ENCODE measurements at regions of chr11 and their contacts with region 1.

Region 1: DNA sequence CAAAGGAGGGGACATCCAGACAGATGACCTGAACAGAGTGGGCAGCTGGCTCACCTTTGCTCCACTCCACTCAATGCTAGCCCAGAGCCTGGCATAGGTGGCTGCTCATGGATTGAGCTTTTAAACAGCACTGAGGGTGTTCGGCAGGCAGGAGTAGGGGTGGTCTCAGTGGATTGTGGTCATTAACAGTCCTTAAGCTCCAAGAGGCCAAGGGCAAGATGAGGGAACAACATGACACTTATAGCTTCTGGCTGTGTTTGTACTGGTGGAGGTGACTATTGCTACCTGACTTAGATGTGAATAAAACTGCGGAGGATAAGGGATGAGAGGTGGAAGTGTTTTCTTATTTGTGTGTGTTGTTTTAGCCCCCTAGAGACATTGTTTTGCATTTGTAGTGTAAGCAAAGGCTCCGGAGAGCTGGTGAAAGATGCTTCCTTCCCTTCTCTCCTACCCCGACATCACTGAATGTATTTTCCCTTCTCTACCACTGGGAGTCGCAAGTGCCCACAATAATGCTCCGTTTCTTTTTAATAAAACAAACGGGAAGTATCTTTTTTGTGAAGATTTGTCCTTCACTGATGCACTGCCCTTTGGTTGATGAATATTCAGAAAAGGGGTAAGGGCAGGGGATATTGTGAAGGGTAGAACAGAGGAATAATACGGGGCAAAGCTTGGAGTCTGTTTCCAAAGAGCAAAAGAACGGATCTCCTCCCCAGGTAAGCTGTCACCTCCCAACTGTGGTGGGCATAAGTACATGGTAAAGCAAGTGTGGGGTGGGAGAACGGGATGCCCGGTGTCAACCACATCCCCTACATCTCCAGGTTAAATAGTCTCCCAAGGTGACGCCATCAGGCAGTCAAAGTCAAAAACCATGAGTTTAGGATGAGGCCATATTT is 27.5 kb upstream of the MTNR1B start:
- DNase-seq: peak; percentile 61
- H3K4me3 ChIP-seq: no peak overlapping the region
- H3K27ac ChIP-seq: no peak overlapping the region
- H3K4me1 ChIP-seq: no peaks in the 10 kb centered on the region
- H3K27me3 ChIP-seq: peaks cover 5% of the 10 kb centered on the region
- CTCF ChIP-seq: peak; percentile 86

Region 2: DNA sequence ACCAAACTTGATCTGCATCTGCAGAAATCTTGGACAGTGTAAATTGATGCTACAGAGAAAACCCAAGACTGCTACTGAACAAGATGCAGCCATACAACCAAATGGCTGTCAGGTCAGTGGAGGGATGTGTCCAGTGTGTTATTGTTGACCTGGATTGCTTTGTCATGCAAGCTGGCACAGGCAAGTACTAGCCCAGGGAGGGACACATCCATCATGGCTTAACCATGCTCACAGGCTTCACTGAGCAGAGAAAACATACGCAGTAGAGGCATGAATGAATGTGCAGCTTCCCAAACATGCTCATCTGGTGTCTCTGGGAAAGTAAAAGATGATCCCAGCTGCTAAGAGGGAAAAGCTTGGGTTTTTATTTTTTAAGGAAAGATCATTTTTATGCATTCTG is 121.2 kb after region 1 on chr11:
- CTCF ChIA-PET with region 1: interaction called, 13 read pairs
- POLR2A ChIA-PET with region 1: no interaction called
- intact Hi-C with region 1: loop called (anchors 1 kb)
- DNase-seq: no peak
- H3K4me3 ChIP-seq: no peak overlapping the region
- H3K27ac ChIP-seq: no peak overlapping the region
- H3K4me1 ChIP-seq: no peaks in the 10 kb centered on the region
- H3K27me3 ChIP-seq: peaks cover under 1% of the 10 kb centered on the region
- CTCF ChIP-seq: no peak

Region 3: DNA sequence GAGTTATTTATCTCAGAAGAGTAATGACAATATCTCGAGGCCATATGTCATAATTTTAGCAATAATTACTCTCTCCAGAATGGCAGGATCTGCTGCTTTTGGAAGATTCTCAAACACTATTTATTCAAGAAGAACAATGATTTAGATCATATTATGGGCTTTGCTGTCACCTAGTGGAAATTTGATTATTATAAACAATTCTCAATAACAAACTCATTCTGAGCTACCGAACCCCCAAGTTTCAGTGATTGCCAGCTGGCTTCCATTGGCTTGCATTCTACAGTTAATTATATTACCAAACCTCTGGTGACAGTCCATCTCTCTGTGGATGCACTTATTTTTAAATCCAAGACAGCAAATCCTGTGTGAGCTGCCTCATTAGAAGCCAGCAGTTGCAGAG is 283.7 kb after region 1 on chr11:
- CTCF ChIA-PET with region 1: interaction called, 5 read pairs
- POLR2A ChIA-PET with region 1: no interaction called
- intact Hi-C with region 1: loop called (anchors 5 kb)
- DNase-seq: peak; percentile 47
- H3K4me3 ChIP-seq: no peak overlapping the region
- H3K27ac ChIP-seq: no peak overlapping the region
- H3K4me1 ChIP-seq: no peaks in the 10 kb centered on the region
- H3K27me3 ChIP-seq: no peaks in the 10 kb centered on the region
- CTCF ChIP-seq: peak; percentile 46; the same call in 1 of the 2 replicates